ENCODE measurements at regions of chr10 and their contacts with region 1.

Region 1: GRCh38 chr10:70832852-70833528 is 17.2 kb downstream of the SGPL1 start:
- DNase-seq: peak in 1 of 2 experiments; percentile 84
- H3K4me3 ChIP-seq: no peak overlapping the region
- H3K27ac ChIP-seq: peak overlapping the region; percentile 80
- H3K4me1 ChIP-seq: peaks cover 77% of the 10 kb centered on the region
- H3K27me3 ChIP-seq: no peaks in the 10 kb centered on the region
- CTCF ChIP-seq: no peak

Region 2: GRCh38 chr10:70513848-70514309 is 319.1 kb before region 1 on chr10:
- CTCF ChIA-PET with region 1: interaction called, 11 read pairs
- POLR2A ChIA-PET with region 1: no interaction called
- intact Hi-C with region 1: no loop called
- DNase-seq: no peak
- H3K4me3 ChIP-seq: no peak overlapping the region
- H3K27ac ChIP-seq: no peak overlapping the region
- H3K4me1 ChIP-seq: peaks cover 8% of the 10 kb centered on the region
- H3K27me3 ChIP-seq: no peaks in the 10 kb centered on the region
- CTCF ChIP-seq: no peak

Region 3: DNA sequence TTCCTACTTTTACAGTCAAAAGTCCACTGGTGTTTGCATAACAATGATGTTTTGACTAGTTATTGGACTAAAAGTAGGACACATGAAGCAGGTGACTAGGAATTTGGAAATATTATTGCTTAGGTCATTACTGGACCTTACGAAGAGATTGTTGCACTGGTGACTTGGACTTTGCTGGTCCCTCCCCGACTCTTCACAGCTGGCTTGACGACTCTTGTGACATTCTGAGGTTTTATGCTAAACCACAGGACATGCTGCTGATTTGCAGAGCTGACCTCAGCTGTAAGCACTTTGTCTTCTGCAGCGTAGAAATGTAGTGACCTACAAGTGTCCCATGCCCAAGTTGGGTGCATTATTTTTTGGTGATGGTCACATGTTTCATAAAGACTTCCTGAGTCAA is 33.4 kb after region 1 on chr10:
- CTCF ChIA-PET with region 1: interaction called, 3 read pairs
- POLR2A ChIA-PET with region 1: interaction called, 4 read pairs
- intact Hi-C with region 1: loop called (anchors 1 kb)
- DNase-seq: peak; percentile 69 to 96
- H3K4me3 ChIP-seq: peak overlapping the region; percentile 39; the same call in 1 of the 2 replicates
- H3K27ac ChIP-seq: peak overlapping the region; percentile 88
- H3K4me1 ChIP-seq: peaks cover 48% of the 10 kb centered on the region
- H3K27me3 ChIP-seq: no peaks in the 10 kb centered on the region
- CTCF ChIP-seq: no peak

Region 4: GRCh38 chr10:71015674-71016073 is 182.7 kb after region 1 on chr10:
- CTCF ChIA-PET with region 1: no interaction called
- POLR2A ChIA-PET with region 1: no interaction called
- intact Hi-C with region 1: no loop called
- DNase-seq: no peak
- H3K4me3 ChIP-seq: no peak overlapping the region
- H3K27ac ChIP-seq: no peak overlapping the region
- H3K4me1 ChIP-seq: no peaks in the 10 kb centered on the region
- H3K27me3 ChIP-seq: peaks cover 95% of the 10 kb centered on the region
- CTCF ChIP-seq: no peak

Measured in PC-9 (cell line).